ENCODE measurements at regions of chr5 and their contacts with region 1.

Region 1: DNA sequence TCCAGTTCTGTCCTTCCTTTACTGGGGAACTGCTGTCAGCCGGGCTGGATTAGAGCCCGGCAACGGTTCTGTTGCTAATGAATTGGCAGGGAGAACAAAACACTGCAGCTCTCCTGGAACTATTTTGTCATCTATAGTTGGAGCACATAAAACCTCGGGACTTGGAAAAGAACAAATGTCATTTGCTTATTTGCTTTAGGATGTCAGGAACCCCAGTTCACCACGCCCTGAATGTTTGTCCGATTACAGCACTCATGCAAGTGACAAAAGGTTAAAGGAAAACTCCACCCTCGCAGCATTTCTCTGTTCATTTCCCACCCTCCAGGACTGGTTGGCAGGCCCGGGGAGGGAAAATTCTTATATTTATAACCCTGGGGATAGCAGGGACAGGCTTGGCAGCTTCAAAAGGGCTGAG is 66.4 kb upstream of the PLPP1 start:
- DNase-seq: peak; percentile 75 to 82
- ATAC-seq: peak; percentile 84 to 87
- H3K4me3 ChIP-seq: peak overlapping the region in 3 of 4 donors; percentile 23 to 34 (median 32)
- H3K27ac ChIP-seq: peak overlapping the region; percentile 83 to 89 (median 84)
- H3K4me1 ChIP-seq: peaks cover 42 to 69% of the 10 kb centered on the region in 2 donors
- H3K27me3 ChIP-seq: no peaks in the 10 kb centered on the region
- CTCF ChIP-seq: no peak
- POLR2A ChIP-seq: peak; percentile 14 to 23

Region 2: DNA sequence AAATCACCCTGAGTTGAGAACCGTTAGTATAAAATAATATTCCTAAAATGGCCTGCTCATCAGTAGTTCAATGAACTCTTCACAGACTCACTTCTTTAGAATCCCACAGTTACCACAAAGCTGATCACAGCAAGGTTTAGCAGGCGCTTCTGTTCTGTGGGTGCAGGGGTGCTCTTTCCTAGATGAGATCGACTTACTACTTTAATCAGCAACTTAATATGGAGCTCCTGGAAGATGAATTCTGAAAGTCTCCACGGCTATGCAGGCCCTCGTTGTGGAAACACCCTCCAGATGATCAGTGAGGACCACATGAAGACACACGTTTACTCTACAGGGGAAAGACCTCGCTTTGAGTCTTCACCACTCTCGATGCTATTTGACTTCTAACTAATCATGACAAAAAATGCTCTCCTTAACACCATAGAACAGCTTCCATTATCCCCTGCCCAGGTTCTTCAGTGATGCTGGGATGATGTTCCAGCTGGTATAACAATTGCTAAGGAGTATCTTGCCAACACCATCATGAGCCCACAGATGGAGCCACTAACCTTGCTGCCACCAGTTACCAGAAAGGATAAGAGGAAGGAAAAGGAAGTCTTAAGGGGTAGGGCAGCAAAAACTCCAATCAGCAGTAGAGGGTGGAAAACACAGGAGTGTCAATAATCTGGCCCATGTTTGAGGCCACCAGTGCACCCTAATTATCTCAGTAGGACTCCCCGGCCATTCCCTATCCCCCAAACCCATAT is 459.1 kb before region 1 on chr5:
- in situ Hi-C with region 1: no loop called
- intact Hi-C with region 1: no loop called
- DNase-seq: no peak
- ATAC-seq: no peak
- H3K4me3 ChIP-seq: no peak overlapping the region
- H3K27ac ChIP-seq: no peak overlapping the region
- H3K4me1 ChIP-seq: peaks cover 0 to 4% of the 10 kb centered on the region in 2 donors
- H3K27me3 ChIP-seq: peaks cover 0 to 3% (median 0%) of the 10 kb centered on the region in 3 donors
- CTCF ChIP-seq: no peak
- POLR2A ChIP-seq: no peak

Region 3: GRCh38 chr5:55439008-55439407 is 162.2 kb before region 1 on chr5:
- in situ Hi-C with region 1: loop called in 1 of 4 experiments (anchors 10 kb)
- intact Hi-C with region 1: loop called (anchors 2 kb)
- DNase-seq: peak; percentile 42 to 68
- ATAC-seq: peak; percentile 50 to 73
- H3K4me3 ChIP-seq: peak overlapping the region in 1 of 4 donors; percentile 9
- H3K27ac ChIP-seq: peak overlapping the region; percentile 89 to 93 (median 90)
- H3K4me1 ChIP-seq: peaks cover 67 to 73% of the 10 kb centered on the region in 2 donors
- H3K27me3 ChIP-seq: no peaks in the 10 kb centered on the region
- CTCF ChIP-seq: no peak
- POLR2A ChIP-seq: no peak

Region 4: DNA sequence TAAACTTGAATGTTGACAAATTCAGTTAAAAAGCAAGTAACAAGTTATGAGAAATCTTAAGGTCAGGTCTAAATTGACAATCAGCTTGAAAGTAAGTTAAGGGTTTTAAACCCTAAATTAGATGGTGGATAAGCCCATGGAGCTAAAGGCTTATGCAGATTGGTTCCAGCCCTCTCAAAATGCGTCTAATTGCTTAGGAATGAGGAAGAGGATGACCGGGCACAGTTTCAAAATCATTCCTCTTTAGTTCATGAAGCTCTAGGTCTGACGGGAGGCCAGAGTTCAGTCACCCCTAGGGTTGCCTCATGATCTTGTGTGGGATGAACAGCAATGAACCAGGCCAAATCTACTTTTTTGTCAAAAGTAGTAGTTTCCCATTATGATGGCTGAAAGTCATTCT is 35.5 kb after region 1 on chr5:
- in situ Hi-C with region 1: no loop called
- intact Hi-C with region 1: loop called (anchors 2 kb)
- DNase-seq: peak in 1 of 2 donors; percentile 50
- ATAC-seq: peak in 1 of 2 donors; percentile 11
- H3K4me3 ChIP-seq: no peak overlapping the region
- H3K27ac ChIP-seq: peak overlapping the region; percentile 23 to 87 (median 50)
- H3K4me1 ChIP-seq: peaks cover 28 to 39% of the 10 kb centered on the region in 2 donors
- H3K27me3 ChIP-seq: no peaks in the 10 kb centered on the region
- CTCF ChIP-seq: no peak
- POLR2A ChIP-seq: no peak

Region 5: DNA sequence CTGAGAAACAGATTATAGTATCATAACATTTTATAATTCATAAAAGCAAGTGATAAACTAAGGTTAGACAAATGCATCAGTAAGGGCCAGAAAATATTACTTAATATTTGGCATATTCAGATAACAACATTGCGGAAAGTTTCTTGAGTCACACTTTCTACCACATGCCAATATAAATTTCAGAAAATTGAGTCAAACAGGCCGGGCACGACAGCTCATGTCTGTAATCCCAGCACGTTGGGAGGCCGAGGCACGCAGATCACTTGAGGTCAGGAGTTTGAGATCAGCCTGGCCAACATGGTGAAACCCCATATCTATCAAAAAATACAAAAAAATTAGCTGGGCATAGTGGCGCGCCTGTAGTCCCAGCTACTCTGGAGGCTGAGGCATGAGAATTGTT is 63.9 kb after region 1 on chr5:
- in situ Hi-C with region 1: no loop called
- intact Hi-C with region 1: no loop called
- DNase-seq: peak in 1 of 2 donors; percentile 29
- ATAC-seq: peak in 1 of 2 donors; percentile 55
- H3K4me3 ChIP-seq: no peak overlapping the region
- H3K27ac ChIP-seq: no peak overlapping the region
- H3K4me1 ChIP-seq: no peaks in the 10 kb centered on the region
- H3K27me3 ChIP-seq: no peaks in the 10 kb centered on the region
- CTCF ChIP-seq: no peak
- POLR2A ChIP-seq: no peak